ENCODE measurements at regions of chr4 and their contacts with region 1.

Region 1: GRCh38 chr4:119628308-119629141 is at the start of gene PDE5A:
- DNase-seq: peak; percentile 83
- ATAC-seq: peak; percentile 88
- H3K4me3 Mint-ChIP-seq: peak within 1 kb of the TSS; percentile 76
- H3K27ac Mint-ChIP-seq: no peak within 1 kb of the TSS
- H3K4me1 Mint-ChIP-seq: peaks cover 17% of the 10 kb centered on the region
- H3K27me3 Mint-ChIP-seq: peaks cover 43% of the 10 kb centered on the region
- total RNA-seq, gene PDE5A: 0.18 TPM in 1 of 2 experiments, not detected in the other

Region 2: DNA sequence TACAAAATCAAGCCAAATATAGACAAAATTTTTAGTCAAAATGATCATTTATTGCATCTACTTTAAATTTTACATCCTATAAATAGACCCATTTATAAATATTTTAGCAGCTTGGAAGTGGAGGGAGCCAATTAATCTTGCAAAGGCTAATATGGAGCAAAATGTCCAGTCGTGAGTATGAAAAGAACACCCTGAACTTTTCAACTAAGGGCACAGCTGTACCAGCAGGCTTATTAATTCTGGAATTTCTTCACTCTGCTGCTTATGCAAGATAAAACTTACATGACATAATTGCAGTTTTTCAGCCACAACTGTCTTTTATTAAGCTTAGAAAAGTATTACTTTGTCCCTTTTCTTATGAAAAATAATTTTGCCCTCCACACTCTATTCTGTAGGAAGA is 438.9 kb before region 1 on chr4:
- CTCF ChIA-PET with region 1: no interaction called
- DNase-seq: no peak
- ATAC-seq: no peak
- H3K4me3 Mint-ChIP-seq: no peak overlapping the region
- H3K27ac Mint-ChIP-seq: no peak overlapping the region
- H3K4me1 Mint-ChIP-seq: peaks cover 2% of the 10 kb centered on the region
- H3K27me3 Mint-ChIP-seq: no peaks in the 10 kb centered on the region

Region 3: DNA sequence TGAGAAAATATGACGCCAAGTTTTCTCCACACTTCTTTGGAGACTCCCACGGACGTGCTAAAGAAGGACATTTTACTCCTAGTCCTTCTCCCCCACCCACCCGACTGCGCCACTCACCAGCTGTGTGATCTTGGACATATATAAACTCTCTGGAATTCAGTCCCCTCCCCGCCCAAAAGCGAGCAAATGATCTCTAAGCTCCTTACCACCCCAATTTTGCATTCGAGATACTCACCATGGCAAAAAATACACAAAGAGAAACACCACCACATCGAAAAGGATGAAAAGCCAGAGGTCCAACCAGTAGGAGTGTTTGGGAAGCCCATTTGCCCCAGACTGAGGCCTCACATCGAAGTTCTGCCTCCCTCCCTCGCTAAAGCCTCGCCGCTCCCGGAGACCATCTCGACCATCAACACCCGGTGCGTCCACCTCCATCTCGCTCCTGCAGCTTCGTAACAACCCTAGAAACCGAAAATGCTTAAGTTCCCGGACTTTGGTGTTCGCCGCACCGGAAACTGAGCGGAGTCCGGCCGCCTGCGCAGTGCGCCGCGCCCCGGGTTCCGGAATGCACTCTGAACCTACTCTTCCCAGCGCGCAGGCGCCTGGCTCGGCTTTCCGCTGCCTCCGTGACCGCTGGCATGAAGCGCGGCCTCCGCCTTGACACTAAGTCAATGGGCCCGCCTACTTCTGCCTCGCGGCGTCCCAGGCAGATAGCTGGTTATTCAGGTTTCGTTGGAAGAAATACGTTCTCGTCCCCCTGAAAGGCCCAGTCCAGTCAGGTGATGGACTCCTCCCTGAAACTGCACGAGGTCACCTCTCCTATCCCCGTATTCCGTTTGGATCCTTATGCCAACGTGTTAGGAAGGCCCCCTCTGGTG is 328.2 kb before region 1 on chr4:
- CTCF ChIA-PET with region 1: interaction called, 15 read pairs
- DNase-seq: peak; percentile 96
- ATAC-seq: peak; percentile 99
- H3K4me3 Mint-ChIP-seq: peak overlapping the region; percentile 86
- H3K27ac Mint-ChIP-seq: peak overlapping the region; percentile 98
- H3K4me1 Mint-ChIP-seq: peaks cover 26% of the 10 kb centered on the region
- H3K27me3 Mint-ChIP-seq: no peaks in the 10 kb centered on the region

Region 4: GRCh38 chr4:119478446-119479179 is 149.9 kb before region 1 on chr4:
- CTCF ChIA-PET with region 1: no interaction called
- DNase-seq: no peak
- ATAC-seq: no peak
- H3K4me3 Mint-ChIP-seq: no peak overlapping the region
- H3K27ac Mint-ChIP-seq: no peak overlapping the region
- H3K4me1 Mint-ChIP-seq: no peaks in the 10 kb centered on the region
- H3K27me3 Mint-ChIP-seq: no peaks in the 10 kb centered on the region

Region 5: DNA sequence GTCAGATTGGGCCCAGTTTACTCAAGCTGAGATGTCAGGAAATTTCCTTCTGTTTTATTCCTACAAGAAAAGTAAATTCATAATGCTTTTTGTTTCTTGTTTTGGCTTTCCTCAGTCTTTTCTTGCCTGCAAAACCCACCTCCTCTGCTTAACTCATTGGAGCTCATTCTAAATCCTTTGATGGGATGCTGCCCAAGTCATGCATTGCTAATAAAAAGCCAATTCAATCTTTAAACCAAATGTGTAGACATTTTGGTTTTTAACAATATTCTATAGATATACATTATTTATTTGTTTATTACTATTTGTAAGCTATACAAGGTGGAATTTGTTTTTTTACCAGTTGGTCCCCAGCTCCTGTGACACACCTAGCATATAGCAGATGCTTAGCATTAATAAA is 13.2 kb after region 1 on chr4:
- CTCF ChIA-PET with region 1: interaction called, 15 read pairs
- DNase-seq: no peak
- ATAC-seq: no peak
- H3K4me3 Mint-ChIP-seq: no peak overlapping the region
- H3K27ac Mint-ChIP-seq: no peak overlapping the region
- H3K4me1 Mint-ChIP-seq: no peaks in the 10 kb centered on the region
- H3K27me3 Mint-ChIP-seq: peaks cover 2% of the 10 kb centered on the region

Region 6: GRCh38 chr4:119785963-119786362 is 157.4 kb after region 1 on chr4:
- CTCF ChIA-PET with region 1: interaction called, 11 read pairs
- DNase-seq: no peak
- ATAC-seq: no peak
- H3K4me3 Mint-ChIP-seq: no peak overlapping the region
- H3K27ac Mint-ChIP-seq: no peak overlapping the region
- H3K4me1 Mint-ChIP-seq: no peaks in the 10 kb centered on the region
- H3K27me3 Mint-ChIP-seq: peaks cover 3% of the 10 kb centered on the region

Region 7: DNA sequence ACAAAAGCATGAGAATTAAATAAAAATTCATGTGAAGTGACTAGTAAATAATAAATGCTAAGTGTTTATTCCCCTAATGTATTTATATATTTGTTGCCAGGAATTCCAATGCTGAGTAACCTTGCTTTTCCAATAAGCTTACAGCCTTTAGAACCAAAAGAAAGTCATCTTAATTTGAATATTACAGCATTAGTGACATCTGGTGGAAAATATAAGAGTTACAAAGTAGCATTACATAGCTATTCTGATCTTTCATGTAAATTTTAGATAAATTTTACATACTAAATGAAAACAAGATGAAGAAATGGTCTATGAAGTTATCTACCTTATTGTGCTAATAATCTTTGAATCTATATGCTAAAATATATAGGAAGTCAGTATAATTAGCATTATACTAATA is 427.7 kb after region 1 on chr4:
- CTCF ChIA-PET with region 1: interaction called, 38 read pairs
- DNase-seq: no peak
- ATAC-seq: no peak
- H3K4me3 Mint-ChIP-seq: no peak overlapping the region
- H3K27ac Mint-ChIP-seq: no peak overlapping the region
- H3K4me1 Mint-ChIP-seq: peaks cover 15% of the 10 kb centered on the region
- H3K27me3 Mint-ChIP-seq: no peaks in the 10 kb centered on the region